ENCODE measurements at regions of chr20 and their contacts with region 1.

Region 1: DNA sequence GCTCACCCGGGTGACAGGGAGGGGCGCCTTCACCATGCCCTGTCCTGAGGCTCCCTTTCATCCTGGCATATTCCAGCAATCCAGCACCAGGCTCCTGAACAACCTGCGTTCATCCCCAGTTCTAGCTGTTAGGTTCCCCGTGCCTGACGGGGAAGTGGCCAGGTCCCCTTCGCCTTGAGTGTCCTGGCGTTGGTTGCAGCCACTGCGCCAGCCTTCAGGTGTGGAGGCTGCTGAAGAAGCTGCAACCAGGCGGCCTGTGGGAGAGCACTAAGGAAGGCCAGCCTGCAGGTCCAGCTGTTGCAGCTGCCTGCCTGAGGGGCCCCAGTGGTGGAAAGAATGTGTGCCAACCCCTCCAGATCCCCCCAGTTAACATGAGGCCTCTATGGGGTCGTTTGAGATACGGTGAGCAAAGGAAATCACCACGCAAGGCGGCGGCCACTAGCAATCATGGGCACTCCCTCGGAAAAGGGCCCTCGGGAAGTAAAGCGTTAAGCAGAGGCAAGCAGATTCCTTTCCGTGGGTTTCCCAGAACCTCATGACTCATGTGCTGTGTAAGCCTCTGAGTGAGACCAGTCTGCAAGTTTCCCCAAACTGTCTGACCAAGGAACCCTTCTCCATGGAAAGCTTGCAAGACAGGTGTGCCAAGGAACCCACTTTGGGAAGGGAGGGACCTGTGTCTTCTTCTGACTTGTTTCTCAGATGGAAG is 320.8 kb downstream of the TAF4 start:
- DNase-seq: no peak

Region 2: DNA sequence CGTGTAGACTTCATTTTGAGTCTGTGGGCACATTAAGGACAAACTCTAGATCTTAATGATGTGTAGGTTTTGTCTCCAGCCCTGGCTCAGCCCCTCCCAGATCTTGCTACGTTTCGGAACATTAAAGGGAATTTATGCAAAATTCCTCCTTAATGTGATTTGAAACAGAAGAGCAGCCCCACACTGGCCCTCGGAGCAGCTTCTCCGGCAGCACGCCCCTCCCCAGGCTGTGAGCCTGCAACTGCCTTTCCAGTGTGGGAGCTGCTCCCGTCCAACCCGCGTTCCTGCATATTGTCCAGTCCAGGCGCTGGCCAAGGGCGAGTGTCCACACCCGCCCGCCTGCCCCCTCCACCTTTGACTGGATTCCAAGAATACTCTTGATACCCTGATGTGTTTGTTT is 63.6 kb after region 1 on chr20:
- intact Hi-C with region 1: no loop called
- DNase-seq: peak in 11 of 42 donors; percentile 20 to 55 (median 27)

Region 3: DNA sequence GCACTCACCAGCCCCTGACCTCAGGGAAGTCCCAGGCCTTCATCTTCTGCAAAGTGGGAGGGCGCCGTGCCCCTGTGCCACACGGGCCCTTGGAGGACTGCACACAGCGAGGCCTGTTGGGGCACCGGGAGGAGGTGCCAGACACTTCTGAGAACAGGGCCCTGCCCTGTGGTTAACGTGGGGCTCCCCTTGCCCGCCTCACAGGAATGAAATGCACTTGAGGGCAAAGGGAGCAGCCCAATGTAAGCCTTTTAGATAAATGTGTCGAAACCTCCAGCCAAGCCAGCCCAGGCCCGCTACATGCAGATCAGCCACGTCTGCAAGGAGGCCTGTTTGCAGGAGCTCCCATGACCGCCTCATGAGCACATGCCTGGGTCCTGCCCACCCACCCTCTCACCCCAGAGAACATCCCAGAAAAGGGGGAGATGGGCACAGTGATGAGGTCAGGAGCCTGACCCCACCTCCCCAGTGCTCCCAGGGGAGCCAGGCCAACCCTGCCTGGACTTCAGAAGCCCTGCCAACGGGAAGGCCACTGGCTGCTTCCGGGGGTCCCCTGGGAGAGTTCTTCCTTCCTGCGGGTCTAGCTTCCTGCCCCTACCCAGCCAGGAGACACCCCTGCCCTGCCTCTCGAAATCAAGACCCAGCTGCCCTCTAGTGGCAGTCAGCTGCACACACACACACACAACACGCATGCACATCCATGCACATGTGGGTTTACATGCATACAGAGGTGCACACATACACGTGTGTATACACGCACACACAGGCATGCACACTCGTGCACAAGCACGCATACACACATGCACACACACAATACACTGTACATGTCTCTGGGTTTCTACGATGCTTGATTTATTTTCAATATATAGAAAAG is 142.1 kb after region 1 on chr20:
- intact Hi-C with region 1: loop called (anchors 5 kb)
- DNase-seq: peak in 41 of 42 donors; percentile 24 to 82 (median 57)

Measured in head of caudate nucleus (tissue), 42 donors.